Caco-2 (cell line): ENCODE measurements at regions of chr2 and their contacts with region 1.

Region 1: GRCh38 chr2:81324046-81324445 is 1019.5 kb upstream of the LRRTM1 start:
- DNase-seq: peak in 1 of 2 experiments; percentile 28
- H3K4me3 ChIP-seq: no peak overlapping the region
- H3K4me3 Mint-ChIP-seq: no peak overlapping the region
- H3K27ac Mint-ChIP-seq: no peak overlapping the region
- H3K4me1 ChIP-seq: no peaks in the 10 kb centered on the region
- H3K4me1 Mint-ChIP-seq: no peaks in the 10 kb centered on the region
- H3K27me3 ChIP-seq: no peaks in the 10 kb centered on the region
- H3K27me3 Mint-ChIP-seq: no peaks in the 10 kb centered on the region
- CTCF ChIP-seq: peak; percentile 27 to 44

Region 2: GRCh38 chr2:81196933-81197628 is 127.0 kb before region 1 on chr2:
- CTCF ChIA-PET with region 1: no interaction called
- POLR2A ChIA-PET with region 1: no interaction called
- intact Hi-C with region 1: no loop called
- DNase-seq: no peak
- H3K4me3 ChIP-seq: no peak overlapping the region
- H3K4me3 Mint-ChIP-seq: no peak overlapping the region
- H3K27ac Mint-ChIP-seq: no peak overlapping the region
- H3K4me1 ChIP-seq: no peaks in the 10 kb centered on the region
- H3K4me1 Mint-ChIP-seq: no peaks in the 10 kb centered on the region
- H3K27me3 ChIP-seq: no peaks in the 10 kb centered on the region; the same call in 1 of the 2 replicates
- H3K27me3 Mint-ChIP-seq: no peaks in the 10 kb centered on the region
- CTCF ChIP-seq: no peak

Region 3: GRCh38 chr2:81894451-81894990 is 570.5 kb after region 1 on chr2:
- CTCF ChIA-PET with region 1: no interaction called
- POLR2A ChIA-PET with region 1: no interaction called
- intact Hi-C with region 1: loop called (anchors 1 kb)
- DNase-seq: no peak
- H3K4me3 ChIP-seq: no peak overlapping the region
- H3K4me3 Mint-ChIP-seq: no peak overlapping the region
- H3K27ac Mint-ChIP-seq: no peak overlapping the region
- H3K4me1 ChIP-seq: no peaks in the 10 kb centered on the region
- H3K4me1 Mint-ChIP-seq: no peaks in the 10 kb centered on the region
- H3K27me3 ChIP-seq: no peaks in the 10 kb centered on the region
- H3K27me3 Mint-ChIP-seq: peaks cover 6% of the 10 kb centered on the region
- CTCF ChIP-seq: no peak

Region 4: DNA sequence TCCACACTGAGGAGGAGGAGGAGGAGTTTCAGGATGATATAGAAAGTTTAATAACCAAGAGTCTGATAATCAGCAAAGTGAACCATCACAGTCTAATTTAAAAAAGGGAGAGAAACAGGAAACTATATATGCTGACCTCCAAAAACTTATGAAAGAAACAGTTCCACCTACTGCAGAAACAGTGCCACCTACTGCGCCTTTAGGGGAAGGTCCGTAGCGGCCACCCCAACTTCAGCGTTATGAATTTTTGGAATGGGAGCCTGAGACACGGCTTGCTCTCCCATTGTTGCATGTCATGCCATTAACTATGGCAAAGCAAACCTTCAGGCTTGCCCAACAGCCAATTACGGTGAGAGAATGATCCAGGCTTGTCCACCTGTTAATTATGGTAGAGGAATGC is 699.7 kb after region 1 on chr2:
- CTCF ChIA-PET with region 1: no interaction called
- POLR2A ChIA-PET with region 1: no interaction called
- intact Hi-C with region 1: loop called (anchors 5 kb)
- DNase-seq: peak in 1 of 2 experiments; percentile 8
- H3K4me3 ChIP-seq: no peak overlapping the region
- H3K4me3 Mint-ChIP-seq: no peak overlapping the region
- H3K27ac Mint-ChIP-seq: no peak overlapping the region
- H3K4me1 ChIP-seq: no peaks in the 10 kb centered on the region
- H3K4me1 Mint-ChIP-seq: no peaks in the 10 kb centered on the region
- H3K27me3 ChIP-seq: no peaks in the 10 kb centered on the region
- H3K27me3 Mint-ChIP-seq: no peaks in the 10 kb centered on the region
- CTCF ChIP-seq: peak; percentile 29 to 46